ENCODE measurements at regions of chr16 and their contacts with region 1.

Region 1: DNA sequence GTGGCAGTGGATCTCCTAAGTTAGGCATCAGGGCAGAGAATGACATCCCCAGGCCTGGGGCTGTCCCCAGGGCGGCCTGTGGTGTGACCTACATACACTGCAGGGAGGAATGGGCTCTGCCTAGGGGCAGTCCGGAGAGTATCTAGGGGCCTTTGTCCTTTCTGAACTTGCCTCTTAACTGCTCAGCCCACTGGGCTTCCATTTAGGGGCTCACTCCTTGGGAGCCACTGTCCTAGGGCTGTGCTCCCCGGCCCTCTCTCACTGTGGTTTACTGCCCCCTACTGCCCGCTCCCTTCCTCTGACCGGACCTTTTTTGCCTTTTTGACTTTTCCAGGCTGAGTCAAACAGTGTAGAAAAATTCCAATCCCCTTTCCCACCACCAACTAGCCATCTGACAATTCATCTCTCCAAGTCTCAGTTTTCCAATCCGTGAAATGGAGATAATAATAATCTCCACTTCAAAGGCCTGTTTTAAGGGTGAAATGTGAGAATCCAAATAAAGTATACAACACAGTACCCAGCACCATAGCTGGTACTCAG is 66.8 kb downstream of the DNAH3 start:
- DNase-seq: peak in 8 of 9 donors; percentile 12 to 60 (median 33)
- ATAC-seq: peak; percentile 78
- H3K4me3 ChIP-seq: no peak overlapping the region
- H3K4me3 Mint-ChIP-seq: no peak overlapping the region
- H3K27ac ChIP-seq: no peak overlapping the region
- H3K27ac Mint-ChIP-seq: no peak overlapping the region
- H3K4me1 ChIP-seq: no peaks in the 10 kb centered on the region
- H3K4me1 Mint-ChIP-seq: peaks cover 0 to 6% (median 0%) of the 10 kb centered on the region in 7 donors
- H3K27me3 ChIP-seq: no peaks in the 10 kb centered on the region
- H3K27me3 Mint-ChIP-seq: peaks cover 0 to 20% (median 0%) of the 10 kb centered on the region in 5 donors

Region 2: DNA sequence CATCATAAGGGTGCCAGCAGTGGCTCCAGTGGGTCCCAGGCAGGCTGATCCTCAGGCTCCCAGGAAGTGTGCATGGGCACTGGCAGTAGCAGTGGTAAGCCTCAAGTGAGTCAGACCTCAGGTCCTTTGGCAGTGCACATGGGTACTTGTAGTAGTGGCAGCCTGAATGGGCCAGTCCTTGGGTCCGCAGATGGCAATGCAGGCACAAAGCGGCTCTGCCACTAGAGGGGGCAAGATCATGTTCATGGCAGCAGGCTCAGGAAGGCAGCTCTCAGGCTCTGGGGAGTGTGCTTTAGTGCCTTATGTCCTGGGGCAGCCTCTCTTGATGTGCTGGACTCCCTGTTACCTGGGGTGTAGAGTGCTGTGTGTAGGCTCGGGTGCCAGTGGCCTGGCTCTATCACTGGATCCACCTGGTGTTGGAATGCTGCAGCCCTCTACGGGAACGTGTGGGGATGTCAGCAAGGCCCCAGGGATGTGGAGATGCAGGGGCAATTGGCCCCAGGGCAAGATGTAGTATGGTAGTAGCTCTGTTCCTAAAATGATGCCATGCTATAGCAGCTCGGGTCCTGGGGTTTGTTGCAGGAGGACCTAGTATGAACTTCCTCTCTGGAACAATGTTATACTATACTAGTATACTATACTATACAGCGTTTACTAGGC is 309.0 kb before region 1 on chr16:
- CTCF ChIA-PET with region 1: no interaction called
- POLR2A ChIA-PET with region 1: no interaction called
- intact Hi-C with region 1: loop called in 1 of 2 experiments (anchors 1 kb)
- DNase-seq: peak; percentile 8 to 54 (median 27)
- ATAC-seq: peak; percentile 73
- H3K4me3 ChIP-seq: no peak overlapping the region
- H3K4me3 Mint-ChIP-seq: no peak overlapping the region
- H3K27ac ChIP-seq: no peak overlapping the region
- H3K27ac Mint-ChIP-seq: no peak overlapping the region
- H3K4me1 ChIP-seq: no peaks in the 10 kb centered on the region
- H3K4me1 Mint-ChIP-seq: peaks cover 0 to 4% (median 0%) of the 10 kb centered on the region in 7 donors
- H3K27me3 ChIP-seq: no peaks in the 10 kb centered on the region
- H3K27me3 Mint-ChIP-seq: peaks cover 0 to 3% (median 0%) of the 10 kb centered on the region in 5 donors

Region 3: GRCh38 chr16:20799599-20799998 is 284.2 kb before region 1 on chr16:
- CTCF ChIA-PET with region 1: no interaction called
- POLR2A ChIA-PET with region 1: no interaction called
- intact Hi-C with region 1: loop called (anchors 1 to 2 kb)
- DNase-seq: peak in 5 of 9 donors; percentile 16 to 52 (median 26)
- ATAC-seq: peak; percentile 47
- H3K4me3 ChIP-seq: no peak overlapping the region
- H3K4me3 Mint-ChIP-seq: no peak overlapping the region
- H3K27ac ChIP-seq: no peak overlapping the region
- H3K27ac Mint-ChIP-seq: peak overlapping the region in 1 of 9 donors; percentile 87
- H3K4me1 ChIP-seq: peaks cover 4 to 8% of the 10 kb centered on the region in 2 donors
- H3K4me1 Mint-ChIP-seq: peaks cover 0 to 23% (median 20%) of the 10 kb centered on the region in 7 donors
- H3K27me3 ChIP-seq: no peaks in the 10 kb centered on the region
- H3K27me3 Mint-ChIP-seq: no peaks in the 10 kb centered on the region

Measured in naive thymus-derived CD4-positive, alpha-beta T cell (primary cell).